Adrenal gland (tissue), 19 donors: ENCODE measurements at regions of chr9 and their contacts with region 1.

Region 1: DNA sequence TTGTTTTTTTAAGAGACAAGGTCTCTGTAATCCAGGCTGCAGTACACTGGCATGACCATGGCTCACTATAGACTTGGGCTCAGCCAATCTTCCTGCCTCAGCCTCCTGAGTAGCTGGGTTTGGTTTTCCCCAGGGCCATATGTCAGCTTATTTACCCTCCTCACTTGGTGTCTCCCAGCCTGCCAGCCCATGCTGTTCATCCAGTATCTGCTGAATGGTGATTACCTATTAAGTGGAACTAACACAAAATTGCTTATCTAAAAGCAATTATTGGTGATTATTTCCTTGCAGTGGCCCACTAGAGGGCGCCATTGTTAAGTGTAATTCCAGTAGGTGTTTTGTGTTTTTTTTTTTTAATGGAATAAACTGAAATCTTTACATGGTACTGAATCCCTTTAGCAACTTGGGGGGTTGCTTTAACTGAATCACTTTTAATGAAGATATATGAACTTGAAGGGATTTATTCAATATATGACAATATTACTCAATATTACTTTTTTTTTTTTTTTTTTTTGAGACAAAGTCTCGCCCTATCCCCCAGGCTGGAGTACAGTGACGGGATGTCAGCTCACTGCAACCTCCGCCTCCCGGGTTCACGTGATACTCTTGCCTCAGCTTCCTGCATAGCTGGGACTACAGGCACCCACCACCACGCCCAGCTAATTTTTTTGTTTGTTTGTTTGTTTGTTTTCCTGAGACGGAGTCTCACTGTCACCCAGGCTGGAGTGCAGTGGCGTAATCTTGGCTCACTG is 13.8 kb downstream of the EXOSC2 start:
- DNase-seq: peak; percentile 53 to 89 (median 74)
- H3K4me3 ChIP-seq: no peak overlapping the region
- H3K27ac ChIP-seq: no peak overlapping the region
- H3K4me1 ChIP-seq: no peaks in the 10 kb centered on the region
- H3K27me3 ChIP-seq: no peaks in the 10 kb centered on the region
- CTCF ChIP-seq: peak; percentile 60 to 93 (median 82)
- POLR2A ChIP-seq: no peak

Region 2: DNA sequence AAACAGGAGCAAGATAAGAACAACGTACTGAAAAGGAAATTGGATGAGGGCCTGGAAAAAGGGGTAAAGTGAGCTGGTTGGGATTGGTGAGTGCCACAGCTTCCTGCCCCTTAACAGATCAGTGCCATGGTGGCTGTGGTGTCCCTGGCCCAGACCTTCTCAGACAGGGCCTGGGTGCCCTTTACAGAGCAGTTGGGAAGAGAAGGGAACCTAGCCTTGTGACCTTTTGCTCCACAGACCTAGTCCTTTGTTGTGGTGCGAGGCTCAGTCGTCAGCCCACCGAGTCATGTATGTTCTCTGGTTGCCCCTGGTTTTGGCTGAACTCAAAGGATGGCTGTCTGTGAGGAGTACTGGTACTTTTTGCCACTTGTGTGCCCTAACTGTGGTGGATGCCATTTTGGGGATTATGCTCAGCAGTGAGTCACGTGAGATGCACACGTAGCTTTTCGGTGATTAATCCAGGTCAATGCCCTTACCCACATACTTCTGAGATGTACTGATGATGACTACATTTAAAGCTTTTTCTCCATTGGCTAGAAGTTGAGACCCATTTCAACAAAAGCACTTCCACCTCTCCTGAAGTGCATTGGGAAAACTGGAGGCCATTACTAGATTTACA is 34.5 kb after region 1 on chr9:
- intact Hi-C with region 1: no loop called
- DNase-seq: peak in 2 of 7 donors; percentile 36 to 37
- H3K4me3 ChIP-seq: no peak overlapping the region
- H3K27ac ChIP-seq: peak overlapping the region in 1 of 5 donors; percentile 51
- H3K4me1 ChIP-seq: peaks cover 16 to 19% of the 10 kb centered on the region in 2 donors
- H3K27me3 ChIP-seq: no peaks in the 10 kb centered on the region
- CTCF ChIP-seq: no peak
- POLR2A ChIP-seq: no peak

Region 3: GRCh38 chr9:130770679-130771442 is 63.5 kb after region 1 on chr9:
- intact Hi-C with region 1: loop called (anchors 5 to 10 kb)
- DNase-seq: no peak
- H3K4me3 ChIP-seq: no peak overlapping the region
- H3K27ac ChIP-seq: no peak overlapping the region
- H3K4me1 ChIP-seq: peaks cover 3 to 10% of the 10 kb centered on the region in 2 donors
- H3K27me3 ChIP-seq: no peaks in the 10 kb centered on the region
- CTCF ChIP-seq: peak; percentile 40 to 83 (median 69)
- POLR2A ChIP-seq: no peak

Region 4: DNA sequence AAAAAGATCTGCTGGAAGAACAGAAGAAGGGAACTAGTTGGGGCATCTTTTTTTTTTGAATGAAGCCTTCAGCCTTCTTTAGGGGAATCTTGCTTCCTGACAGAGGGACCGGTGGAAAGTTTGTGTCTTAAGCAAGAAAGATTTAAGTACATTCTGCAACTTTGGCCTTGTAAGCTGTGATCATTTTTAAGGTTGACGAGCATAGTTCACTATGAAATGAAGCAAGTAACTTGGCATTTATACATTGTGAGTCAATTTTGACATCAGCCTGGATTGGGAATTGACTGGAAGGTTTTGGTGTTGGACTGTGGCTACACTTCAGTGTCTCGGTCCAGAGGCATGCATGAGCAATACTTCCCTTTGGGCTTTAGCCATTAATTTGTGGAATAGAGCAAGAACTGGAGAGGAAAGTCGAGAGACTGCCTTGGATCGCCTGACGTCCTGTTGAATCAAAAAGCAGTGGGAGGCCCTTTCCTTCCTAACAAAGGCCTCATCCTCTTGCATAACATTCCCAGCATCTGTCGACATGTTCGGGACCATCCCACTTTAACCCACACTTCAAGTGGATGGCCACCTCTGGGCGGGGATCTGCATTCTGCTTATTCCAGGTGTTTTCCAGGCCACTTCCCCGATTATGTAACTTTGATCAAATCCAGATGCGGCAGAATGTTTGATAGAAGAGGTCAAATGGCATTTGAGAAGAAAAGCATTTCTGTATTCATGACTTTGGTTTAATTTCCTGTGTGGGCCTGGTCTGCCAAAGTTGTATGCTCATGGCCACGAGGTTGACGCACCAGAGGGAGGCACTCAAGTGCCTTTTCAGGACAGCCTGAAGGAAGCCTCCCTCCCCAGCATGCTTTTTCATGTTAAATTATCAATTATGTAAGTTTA is 140.2 kb after region 1 on chr9:
- intact Hi-C with region 1: no loop called
- DNase-seq: peak in 6 of 7 donors; percentile 65 to 85 (median 84)
- H3K4me3 ChIP-seq: peak overlapping the region in 1 of 4 donors; percentile 37
- H3K27ac ChIP-seq: peak overlapping the region; percentile 76 to 94 (median 90)
- H3K4me1 ChIP-seq: peaks cover 32 to 51% of the 10 kb centered on the region in 2 donors
- H3K27me3 ChIP-seq: no peaks in the 10 kb centered on the region
- CTCF ChIP-seq: no peak
- POLR2A ChIP-seq: peak in 1 of 2 donors; percentile 55

Region 5: GRCh38 chr9:130860458-130861316 is 153.3 kb after region 1 on chr9:
- intact Hi-C with region 1: loop called (anchors 5 kb)
- DNase-seq: peak; percentile 52 to 94 (median 89)
- H3K4me3 ChIP-seq: no peak overlapping the region
- H3K27ac ChIP-seq: peak overlapping the region; percentile 21 to 91 (median 55)
- H3K4me1 ChIP-seq: peaks cover 0 to 15% of the 10 kb centered on the region in 2 donors
- H3K27me3 ChIP-seq: no peaks in the 10 kb centered on the region
- CTCF ChIP-seq: peak in 3 of 6 experiments; percentile 39 to 48 (median 46)
- POLR2A ChIP-seq: peak in 1 of 2 donors; percentile 28

Region 6: GRCh38 chr9:130997925-130998596 is 290.7 kb after region 1 on chr9:
- intact Hi-C with region 1: loop called in 1 of 2 experiments (anchors 5 kb)
- DNase-seq: peak; percentile 66 to 84 (median 78)
- H3K4me3 ChIP-seq: no peak overlapping the region
- H3K27ac ChIP-seq: no peak overlapping the region
- H3K4me1 ChIP-seq: peaks cover 5 to 10% of the 10 kb centered on the region in 2 donors
- H3K27me3 ChIP-seq: no peaks in the 10 kb centered on the region
- CTCF ChIP-seq: peak; percentile 72 to 85 (median 77)
- POLR2A ChIP-seq: no peak